IMR-90 (cell line): ENCODE measurements at regions of chr9 and their contacts with region 1.

Region 1: DNA sequence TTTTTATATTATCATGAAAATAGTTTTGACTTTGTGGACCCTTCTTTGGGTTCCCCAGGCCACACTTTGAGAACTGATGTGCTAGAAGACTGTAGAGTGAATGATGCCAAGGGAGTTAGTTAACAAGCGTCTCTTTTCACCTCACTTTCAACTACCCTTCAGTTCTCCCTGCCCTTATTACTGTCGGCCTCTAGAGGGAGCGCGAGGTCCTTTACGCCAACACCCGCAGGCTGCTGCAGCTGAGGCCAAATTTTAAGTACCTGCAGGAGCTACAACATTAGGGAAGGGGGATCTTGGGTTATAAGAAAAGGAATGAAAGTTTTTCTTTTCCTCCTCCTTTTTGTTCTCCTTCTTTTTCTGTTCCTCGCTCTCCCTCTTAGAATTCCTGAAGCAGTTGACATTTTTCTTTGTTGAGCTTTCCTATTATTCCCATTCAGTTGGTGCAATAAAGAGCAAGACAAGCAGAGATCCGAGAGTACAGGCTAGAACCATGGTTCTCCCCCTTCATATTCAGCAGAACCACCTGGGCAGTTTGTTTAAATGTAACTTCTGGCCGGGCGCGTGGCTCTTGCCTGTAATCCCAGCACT is 84.0 kb downstream of the ZFAND5 start:
- DNase-seq: peak; percentile 59
- ATAC-seq: peak; percentile 96
- H3K4me3 ChIP-seq: no peak overlapping the region
- H3K27ac ChIP-seq: no peak overlapping the region
- H3K4me1 ChIP-seq: no peaks in the 10 kb centered on the region
- H3K27me3 ChIP-seq: peaks cover 21% of the 10 kb centered on the region
- CTCF ChIP-seq: peak; percentile 94
- POLR2A ChIP-seq: no peak
- RAD21 ChIP-seq: peak; percentile 95

Region 2: GRCh38 chr9:71562140-71562539 is 718.9 kb before region 1 on chr9:
- CTCF ChIA-PET with region 1: no interaction called
- POLR2A ChIA-PET with region 1: no interaction called
- dilution Hi-C with region 1: no loop called
- in situ Hi-C with region 1: no loop called
- intact Hi-C with region 1: no loop called
- DNase-seq: no peak
- ATAC-seq: no peak
- H3K4me3 ChIP-seq: no peak overlapping the region
- H3K27ac ChIP-seq: no peak overlapping the region
- H3K4me1 ChIP-seq: no peaks in the 10 kb centered on the region
- H3K27me3 ChIP-seq: no peaks in the 10 kb centered on the region; the same call in 1 of the 2 replicates
- CTCF ChIP-seq: no peak
- POLR2A ChIP-seq: no peak
- RAD21 ChIP-seq: no peak

Region 3: GRCh38 chr9:72217306-72217842 is 63.6 kb before region 1 on chr9:
- CTCF ChIA-PET with region 1: no interaction called
- POLR2A ChIA-PET with region 1: no interaction called
- dilution Hi-C with region 1: no loop called
- in situ Hi-C with region 1: no loop called
- intact Hi-C with region 1: no loop called
- DNase-seq: no peak
- ATAC-seq: no peak
- H3K4me3 ChIP-seq: no peak overlapping the region
- H3K27ac ChIP-seq: no peak overlapping the region
- H3K4me1 ChIP-seq: no peaks in the 10 kb centered on the region
- H3K27me3 ChIP-seq: no peaks in the 10 kb centered on the region; the same call in 1 of the 2 replicates
- CTCF ChIP-seq: no peak
- POLR2A ChIP-seq: no peak
- RAD21 ChIP-seq: no peak

Region 4: DNA sequence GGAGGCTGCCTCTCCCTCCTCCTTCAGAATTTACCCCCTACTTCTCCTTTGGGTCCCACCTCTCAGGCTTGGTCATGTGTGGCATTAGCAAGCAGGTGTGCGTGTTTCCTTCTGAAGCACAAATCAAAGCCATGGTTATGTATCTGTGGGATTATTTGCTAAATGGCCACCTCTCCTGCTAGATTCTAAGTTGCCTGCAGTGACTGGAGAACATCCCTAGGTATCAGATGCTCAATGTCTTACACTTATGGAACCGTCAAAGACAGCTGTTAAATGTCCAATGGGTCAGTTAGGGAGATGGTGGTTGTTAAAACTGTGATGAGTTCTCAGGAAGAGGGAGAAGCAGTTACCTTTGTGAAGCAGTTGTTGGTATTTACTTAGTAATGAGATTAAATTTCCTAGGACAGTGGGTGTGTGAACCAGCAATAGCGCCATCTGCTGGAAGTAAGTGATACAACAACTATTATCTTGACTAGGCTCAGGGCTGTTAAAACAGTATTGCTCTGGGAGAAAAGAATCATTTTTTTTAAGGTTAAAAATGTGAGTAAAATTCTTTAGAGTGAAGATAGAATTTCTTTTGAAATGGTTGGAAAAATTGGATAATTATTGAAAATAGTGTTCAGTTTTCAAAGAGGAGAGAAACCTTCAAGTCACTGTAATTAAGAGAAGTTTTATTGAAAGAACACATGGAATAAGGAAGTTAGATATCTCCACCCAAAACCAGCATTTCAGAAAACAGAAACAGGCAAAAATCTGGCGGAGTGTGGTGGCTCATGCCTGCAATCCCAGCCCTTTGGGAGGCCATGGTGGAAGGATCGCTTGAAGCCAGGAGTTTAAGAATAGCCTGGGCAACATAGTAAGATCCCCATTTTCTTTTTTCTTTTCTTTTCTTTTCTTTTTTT is 311.7 kb after region 1 on chr9:
- CTCF ChIA-PET with region 1: interaction called, 3 read pairs
- POLR2A ChIA-PET with region 1: no interaction called
- dilution Hi-C with region 1: no loop called
- in situ Hi-C with region 1: loop called (anchors 5 kb)
- intact Hi-C with region 1: no loop called
- DNase-seq: peak; percentile 72
- ATAC-seq: peak; percentile 88
- H3K4me3 ChIP-seq: no peak overlapping the region
- H3K27ac ChIP-seq: no peak overlapping the region; the same call in 1 of the 2 replicates
- H3K4me1 ChIP-seq: peaks cover 5% of the 10 kb centered on the region
- H3K27me3 ChIP-seq: no peaks in the 10 kb centered on the region
- CTCF ChIP-seq: peak; percentile 83
- POLR2A ChIP-seq: no peak
- RAD21 ChIP-seq: peak; percentile 91

Region 5: DNA sequence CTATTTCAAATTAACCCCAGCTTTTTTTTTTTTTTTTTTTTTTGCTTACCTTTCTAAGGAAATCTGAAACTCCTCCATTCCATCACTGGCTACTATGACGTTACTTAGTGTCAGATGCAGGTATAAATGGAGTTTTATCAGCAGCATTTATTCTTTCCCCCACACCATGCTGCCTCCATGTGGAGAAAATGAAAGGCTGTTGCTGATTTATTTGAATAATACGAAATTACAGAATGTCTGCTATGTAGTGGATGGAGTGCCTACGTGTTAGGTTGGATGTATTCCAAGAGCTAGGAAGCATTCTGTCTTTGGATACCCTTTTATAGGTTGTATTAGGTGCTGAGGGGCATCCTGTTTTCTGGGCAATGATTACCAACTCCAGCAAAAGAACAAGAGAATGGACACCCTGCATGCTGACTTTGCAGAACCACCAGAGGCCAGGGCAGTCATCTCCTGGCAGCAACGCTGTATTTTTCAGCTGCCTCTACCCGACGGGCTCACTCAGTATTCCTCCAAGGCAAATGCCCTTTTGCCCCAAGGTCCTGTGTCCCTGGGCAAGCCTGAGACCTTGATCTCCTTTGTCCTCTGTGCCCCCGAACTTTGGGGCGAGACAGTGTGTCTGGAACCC is 472.4 kb after region 1 on chr9:
- CTCF ChIA-PET with region 1: interaction called, 16 read pairs
- POLR2A ChIA-PET with region 1: no interaction called
- dilution Hi-C with region 1: no loop called
- in situ Hi-C with region 1: loop called (anchors 5 kb)
- intact Hi-C with region 1: loop called (anchors 1 kb)
- DNase-seq: peak; percentile 31
- ATAC-seq: peak; percentile 60; the same call in 1 of the 2 replicates
- H3K4me3 ChIP-seq: no peak overlapping the region
- H3K27ac ChIP-seq: no peak overlapping the region
- H3K4me1 ChIP-seq: no peaks in the 10 kb centered on the region
- H3K27me3 ChIP-seq: peaks cover 4% of the 10 kb centered on the region
- CTCF ChIP-seq: peak; percentile 64
- POLR2A ChIP-seq: no peak
- RAD21 ChIP-seq: peak; percentile 73

Region 6: GRCh38 chr9:72827950-72828731 is 547.1 kb after region 1 on chr9:
- CTCF ChIA-PET with region 1: interaction called, 7 read pairs
- POLR2A ChIA-PET with region 1: no interaction called
- dilution Hi-C with region 1: no loop called
- in situ Hi-C with region 1: loop called (anchors 5 kb)
- intact Hi-C with region 1: loop called (anchors 2 kb)
- DNase-seq: no peak
- ATAC-seq: no peak
- H3K4me3 ChIP-seq: no peak overlapping the region
- H3K27ac ChIP-seq: no peak overlapping the region
- H3K4me1 ChIP-seq: no peaks in the 10 kb centered on the region
- H3K27me3 ChIP-seq: no peaks in the 10 kb centered on the region; the same call in 1 of the 2 replicates
- CTCF ChIP-seq: no peak
- POLR2A ChIP-seq: no peak
- RAD21 ChIP-seq: no peak

Region 7: GRCh38 chr9:73023025-73023541 is 742.1 kb after region 1 on chr9:
- CTCF ChIA-PET with region 1: interaction called, 5 read pairs
- POLR2A ChIA-PET with region 1: no interaction called
- dilution Hi-C with region 1: no loop called
- in situ Hi-C with region 1: no loop called
- intact Hi-C with region 1: loop called (anchors 1 kb)
- DNase-seq: peak; percentile 63
- ATAC-seq: peak; percentile 74
- H3K4me3 ChIP-seq: no peak overlapping the region
- H3K27ac ChIP-seq: no peak overlapping the region
- H3K4me1 ChIP-seq: no peaks in the 10 kb centered on the region
- H3K27me3 ChIP-seq: no peaks in the 10 kb centered on the region
- CTCF ChIP-seq: peak; percentile 82
- POLR2A ChIP-seq: no peak
- RAD21 ChIP-seq: peak; percentile 65

Region 8: DNA sequence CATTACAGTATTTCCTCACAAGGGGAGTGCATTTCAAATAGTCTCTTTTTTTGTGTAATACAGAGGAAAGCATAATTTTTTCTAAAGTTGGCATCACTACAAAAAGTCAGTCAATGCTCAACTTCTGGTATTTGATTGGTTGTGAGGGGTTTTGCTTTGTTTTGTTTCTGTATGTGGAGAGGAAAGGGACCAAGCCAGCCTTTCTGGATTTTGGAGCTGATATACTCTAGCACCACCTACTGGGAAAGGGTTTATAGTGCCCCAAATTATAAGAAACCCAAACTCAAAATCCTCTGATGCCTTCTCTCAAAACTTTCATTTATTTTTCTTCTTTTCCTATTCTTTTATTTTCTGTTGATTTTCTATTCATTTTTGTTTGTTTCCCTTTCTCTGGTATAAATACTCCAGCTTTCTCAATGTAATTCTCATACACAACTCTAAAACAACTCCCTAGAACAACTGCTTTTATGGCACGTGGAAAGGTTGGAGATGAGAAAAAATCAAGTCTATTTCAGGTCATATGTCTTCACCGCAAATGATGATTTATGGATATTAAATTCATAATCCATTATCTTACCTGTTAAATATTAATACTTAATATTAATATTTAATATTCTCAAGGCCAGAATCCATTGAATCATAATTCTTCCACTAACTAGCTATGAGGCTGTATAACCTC is 801.1 kb after region 1 on chr9:
- CTCF ChIA-PET with region 1: no interaction called
- POLR2A ChIA-PET with region 1: no interaction called
- dilution Hi-C with region 1: no loop called
- in situ Hi-C with region 1: no loop called
- intact Hi-C with region 1: loop called (anchors 10 kb)
- DNase-seq: peak; percentile 27
- ATAC-seq: peak; percentile 82
- H3K4me3 ChIP-seq: no peak overlapping the region
- H3K27ac ChIP-seq: no peak overlapping the region
- H3K4me1 ChIP-seq: no peaks in the 10 kb centered on the region
- H3K27me3 ChIP-seq: no peaks in the 10 kb centered on the region; the same call in 1 of the 2 replicates
- CTCF ChIP-seq: peak; percentile 69
- POLR2A ChIP-seq: no peak
- RAD21 ChIP-seq: peak; percentile 63